ENCODE measurements at regions of chr1 and their contacts with region 1.

Region 1: GRCh38 chr1:99808391-99809115 is 41.6 kb upstream of the AGL start:
- DNase-seq: peak; percentile 32
- ATAC-seq: peak; percentile 89
- H3K4me3 ChIP-seq: no peak overlapping the region; a peak in 1 of 4 replicates
- H3K27ac ChIP-seq: no peak overlapping the region
- H3K4me1 ChIP-seq: peaks cover 3% of the 10 kb centered on the region; the same call in 1 of the 2 replicates
- H3K27me3 ChIP-seq: no peaks in the 10 kb centered on the region; the same call in 1 of the 2 replicates
- CTCF ChIP-seq: peak; percentile 52

Region 2: DNA sequence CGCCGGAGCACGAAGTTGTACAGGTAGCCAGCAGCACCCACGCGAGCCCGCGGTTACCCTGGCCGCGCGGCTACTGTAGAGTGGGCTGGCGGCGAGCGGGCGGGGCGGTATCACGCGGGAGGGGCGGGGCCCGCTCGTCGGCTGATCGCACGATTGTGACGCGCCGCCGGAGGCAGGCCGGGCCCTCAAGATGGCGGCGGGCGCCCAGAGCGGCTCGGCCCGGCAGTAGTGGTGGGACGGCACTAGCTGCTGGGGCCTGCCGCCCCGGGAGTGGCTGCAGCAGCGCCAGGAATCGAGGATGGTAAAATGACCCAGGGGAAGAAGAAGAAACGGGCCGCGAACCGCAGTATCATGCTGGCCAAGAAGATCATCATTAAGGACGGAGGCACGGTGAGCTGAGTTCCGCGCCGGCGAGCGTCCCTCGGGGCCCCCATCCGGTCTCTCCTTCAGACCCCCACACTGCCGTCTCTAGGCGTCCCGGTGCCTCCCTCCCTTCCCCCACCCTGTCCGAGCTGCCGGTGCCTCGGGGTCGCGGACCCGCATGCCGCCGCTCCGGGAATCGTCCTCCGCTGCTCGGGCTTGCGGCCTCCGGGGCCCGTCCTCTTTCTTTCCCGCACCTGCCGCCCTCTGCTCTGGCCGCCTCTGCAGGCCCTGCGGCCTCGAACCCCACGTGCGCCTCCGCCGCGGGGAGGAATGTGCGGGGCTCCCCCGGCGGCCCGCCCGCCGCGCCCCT is 229.5 kb after region 1 on chr1:
- CTCF ChIA-PET with region 1: no interaction called
- POLR2A ChIA-PET with region 1: no interaction called
- in situ Hi-C with region 1: no loop called
- intact Hi-C with region 1: loop called (anchors 10 kb)
- DNase-seq: no peak
- ATAC-seq: peak; percentile 96
- H3K4me3 ChIP-seq: peak overlapping the region; percentile 61 to 65
- H3K27ac ChIP-seq: peak overlapping the region; percentile 92
- H3K4me1 ChIP-seq: peaks cover 4% of the 10 kb centered on the region; the same call in 1 of the 2 replicates
- H3K27me3 ChIP-seq: no peaks in the 10 kb centered on the region
- CTCF ChIP-seq: no peak

Measured in Panc1 (cell line).